Left ventricle myocardium superior (tissue), 1 donor: ENCODE measurements at regions of chr4 and their contacts with region 1.

Region 1: DNA sequence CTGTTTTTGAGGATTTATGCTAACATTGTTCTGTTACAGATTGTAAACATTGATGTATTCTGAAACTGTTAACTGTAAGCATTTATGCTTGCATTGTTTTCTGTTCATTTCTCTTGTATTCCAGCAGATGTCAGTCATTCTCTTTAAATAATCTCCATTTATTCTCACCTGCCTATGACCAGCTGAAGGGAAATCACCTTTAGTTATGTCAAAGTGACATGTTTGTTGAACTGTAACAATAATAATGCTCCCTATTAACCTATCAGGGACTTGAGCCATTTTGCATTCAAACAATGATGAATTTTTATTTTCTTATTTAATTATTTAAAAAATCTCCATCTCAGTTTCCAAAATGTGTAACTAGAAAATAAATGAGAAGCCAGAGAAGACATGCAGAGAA is 58.0 kb downstream of the SPCS3 start:
- DNase-seq: no peak
- ATAC-seq: no peak

Region 2: DNA sequence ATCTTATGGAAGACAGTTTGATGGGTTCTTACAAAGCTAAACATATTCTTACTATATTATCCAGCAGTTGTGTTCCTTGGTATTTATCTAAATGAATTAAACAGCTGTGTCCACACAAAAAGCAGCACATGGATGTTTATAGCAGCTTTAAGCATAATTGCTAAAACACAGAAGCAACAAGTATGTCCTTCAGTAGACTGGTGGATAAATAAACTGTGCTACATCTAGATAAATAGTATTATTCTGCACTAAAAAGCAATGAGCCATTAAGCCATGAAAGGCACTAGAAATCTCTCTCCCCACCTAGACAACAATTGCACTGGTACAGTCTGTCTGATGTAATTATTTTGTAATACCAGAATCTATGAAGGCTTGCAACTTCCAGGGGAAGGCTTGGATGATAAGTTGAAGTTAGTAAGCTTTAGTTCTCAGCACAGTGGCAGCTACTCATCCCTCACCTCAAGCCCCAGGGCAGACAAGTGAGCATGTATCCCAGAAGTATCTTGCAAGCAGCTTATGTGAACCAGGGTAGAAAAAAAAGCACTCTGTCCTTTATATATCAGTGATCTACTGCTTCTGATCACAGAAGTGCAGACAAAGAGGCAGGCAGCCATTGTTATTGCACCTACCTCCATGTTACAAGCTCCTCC is 275.2 kb before region 1 on chr4:
- intact Hi-C with region 1: no loop called
- DNase-seq: no peak
- ATAC-seq: no peak

Region 3: DNA sequence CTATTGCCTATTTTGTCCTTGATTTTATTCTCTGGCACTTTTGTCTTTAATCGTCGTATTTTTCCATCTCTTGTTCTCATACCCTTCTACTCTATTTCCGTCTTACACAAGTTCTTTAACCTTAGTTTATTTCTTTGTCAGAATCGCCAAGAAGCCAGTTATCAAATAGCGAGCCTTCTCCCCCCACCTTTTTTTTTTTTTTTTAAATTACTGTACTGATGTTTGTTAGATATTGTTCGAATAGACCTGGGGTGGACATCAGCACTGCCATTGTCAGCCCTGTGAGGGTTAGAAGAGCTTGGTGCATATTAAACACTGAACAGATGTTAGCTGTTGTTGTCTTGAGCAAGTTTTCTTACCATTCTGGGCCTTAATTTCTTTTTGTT is 56.8 kb before region 1 on chr4:
- intact Hi-C with region 1: no loop called
- DNase-seq: no peak
- ATAC-seq: no peak

Region 4: DNA sequence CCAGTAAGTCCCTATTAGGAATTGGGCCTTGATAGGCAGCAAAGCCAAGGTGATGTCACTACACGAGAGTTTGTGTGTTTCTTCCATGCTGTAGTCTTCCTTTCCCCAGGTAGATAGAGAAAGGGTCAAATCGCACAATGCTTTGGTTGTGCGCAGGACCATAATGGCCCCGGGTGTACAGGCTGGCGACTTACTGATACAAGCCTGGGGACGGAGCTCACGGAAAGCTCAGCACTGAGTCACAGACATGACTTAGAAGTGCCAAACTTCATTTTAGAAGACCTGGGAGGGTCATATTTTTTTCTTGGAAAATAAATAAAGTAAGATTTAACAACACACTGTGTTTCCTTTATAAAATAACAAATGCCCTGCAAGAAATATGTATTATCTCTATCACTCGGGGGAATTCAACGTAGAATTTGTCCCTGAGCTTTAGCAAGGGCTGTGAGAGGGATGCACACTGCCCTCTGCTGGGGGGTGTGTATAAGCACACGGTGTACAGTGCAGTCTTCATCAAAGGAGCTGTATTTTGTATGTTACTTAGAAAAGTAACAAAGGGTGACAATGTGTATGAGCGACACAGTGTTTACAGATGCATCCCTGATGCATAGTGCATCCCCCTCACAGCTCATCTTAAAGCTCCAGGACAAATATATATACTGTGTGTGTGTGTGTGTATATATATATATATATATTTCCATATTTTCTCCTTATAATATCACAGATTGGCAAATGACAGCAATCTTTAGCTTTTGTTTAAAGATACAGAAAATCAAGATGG is 669.5 kb after region 1 on chr4:
- intact Hi-C with region 1: loop called (anchors 5 kb)
- DNase-seq: peak; percentile 36
- ATAC-seq: peak; percentile 75